ENCODE measurements at regions of chr11 and their contacts with region 1.

Region 1: DNA sequence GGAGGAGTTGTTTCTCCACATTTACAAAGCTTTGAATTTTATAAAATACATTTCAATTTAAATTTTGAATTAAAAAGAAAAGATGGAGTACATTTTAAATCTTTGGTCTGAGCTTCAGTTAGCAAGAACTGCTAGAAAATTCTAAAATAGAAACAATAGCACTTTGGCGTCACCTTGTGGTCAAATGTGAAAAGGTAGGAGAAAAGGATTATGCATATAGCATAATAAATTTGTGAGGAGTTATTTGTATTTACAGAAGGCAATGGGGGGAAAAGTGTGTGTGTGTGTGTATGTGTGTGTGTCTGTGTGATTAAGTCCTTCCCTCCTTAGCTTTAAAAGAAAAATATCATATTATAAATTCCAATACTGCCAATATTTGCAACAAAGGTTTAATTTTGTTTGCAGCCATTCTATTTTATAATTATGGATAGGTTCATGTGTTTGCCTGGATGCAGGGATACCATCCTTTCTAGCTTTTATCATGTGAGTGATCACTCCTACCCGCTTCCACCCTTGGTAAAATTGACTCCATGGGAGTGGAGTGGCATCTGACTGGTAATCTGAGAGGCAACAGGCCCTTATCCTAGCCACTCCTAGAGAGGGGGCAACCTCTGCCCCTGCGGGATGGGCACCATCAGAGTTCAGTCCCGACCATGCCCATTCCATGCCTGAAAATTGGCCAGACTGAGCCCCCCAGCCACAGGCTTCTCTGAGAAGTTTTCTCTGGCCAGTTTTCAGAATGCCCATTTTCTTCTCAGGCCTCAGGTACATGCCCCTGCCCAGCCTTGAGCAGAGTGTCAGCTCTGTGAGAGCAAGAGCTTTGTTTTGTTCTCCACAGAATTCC is 13.6 kb upstream of the LGR4 start:
- DNase-seq: peak in 1 of 2 donors; percentile 45
- ATAC-seq: peak in 7 of 8 donors; percentile 31 to 59 (median 49)
- H3K4me3 ChIP-seq: no peak overlapping the region
- H3K27ac ChIP-seq: no peak overlapping the region
- H3K4me1 ChIP-seq: no peaks in the 10 kb centered on the region
- H3K27me3 ChIP-seq: no peaks in the 10 kb centered on the region
- CTCF ChIP-seq: peak; percentile 76 to 94 (median 89)

Region 2: GRCh38 chr11:27183672-27184457 is 302.3 kb before region 1 on chr11:
- intact Hi-C with region 1: loop called (anchors 1 to 5 kb)
- DNase-seq: peak in 1 of 2 donors; percentile 59
- ATAC-seq: peak in 7 of 8 donors; percentile 37 to 70 (median 42)
- H3K4me3 ChIP-seq: no peak overlapping the region
- H3K27ac ChIP-seq: no peak overlapping the region
- H3K4me1 ChIP-seq: peaks cover 0 to 7% (median 0%) of the 10 kb centered on the region in 9 donors
- H3K27me3 ChIP-seq: peaks cover 0 to 4% (median 0%) of the 10 kb centered on the region in 7 donors
- CTCF ChIP-seq: peak; percentile 61 to 84 (median 75)

Region 3: GRCh38 chr11:27296497-27296896 is 189.7 kb before region 1 on chr11:
- intact Hi-C with region 1: loop called in 4 of 10 experiments (anchors 5 to 10 kb)
- DNase-seq: no peak
- ATAC-seq: peak in 4 of 8 donors; percentile 44 to 76 (median 65)
- H3K4me3 ChIP-seq: no peak overlapping the region
- H3K27ac ChIP-seq: peak overlapping the region in 4 of 10 donors; percentile 10 to 65 (median 45)
- H3K4me1 ChIP-seq: peaks cover 0 to 13% (median 0%) of the 10 kb centered on the region in 9 donors
- H3K27me3 ChIP-seq: no peaks in the 10 kb centered on the region
- CTCF ChIP-seq: peak in 8 of 9 donors; percentile 35 to 74 (median 62)

Region 4: GRCh38 chr11:27362749-27363575 is 123.2 kb before region 1 on chr11 and contains the start of gene CCDC34:
- intact Hi-C with region 1: loop called in 2 of 10 experiments (anchors 5 to 10 kb)
- DNase-seq: peak; percentile 88 to 93
- ATAC-seq: peak; percentile 99 to 100 (median 100)
- H3K4me3 ChIP-seq: peak within 1 kb of the TSS; percentile 51 to 93 (median 75)
- H3K27ac ChIP-seq: peak within 1 kb of the TSS in 7 of 10 donors; percentile 3 to 76 (median 34)
- H3K4me1 ChIP-seq: peaks cover 0 to 24% (median 12%) of the 10 kb centered on the region in 9 donors
- H3K27me3 ChIP-seq: no peaks in the 10 kb centered on the region
- CTCF ChIP-seq: peak in 1 of 9 donors; percentile 20
- total RNA-seq, gene CCDC34: 1.1 to 10.7 (median 3.3) TPM

Measured in heart right ventricle (tissue), 16 donors.